Gastrocnemius medialis (tissue), 4 donors: ENCODE measurements at regions of chr7 and their contacts with region 1.

Region 1: DNA sequence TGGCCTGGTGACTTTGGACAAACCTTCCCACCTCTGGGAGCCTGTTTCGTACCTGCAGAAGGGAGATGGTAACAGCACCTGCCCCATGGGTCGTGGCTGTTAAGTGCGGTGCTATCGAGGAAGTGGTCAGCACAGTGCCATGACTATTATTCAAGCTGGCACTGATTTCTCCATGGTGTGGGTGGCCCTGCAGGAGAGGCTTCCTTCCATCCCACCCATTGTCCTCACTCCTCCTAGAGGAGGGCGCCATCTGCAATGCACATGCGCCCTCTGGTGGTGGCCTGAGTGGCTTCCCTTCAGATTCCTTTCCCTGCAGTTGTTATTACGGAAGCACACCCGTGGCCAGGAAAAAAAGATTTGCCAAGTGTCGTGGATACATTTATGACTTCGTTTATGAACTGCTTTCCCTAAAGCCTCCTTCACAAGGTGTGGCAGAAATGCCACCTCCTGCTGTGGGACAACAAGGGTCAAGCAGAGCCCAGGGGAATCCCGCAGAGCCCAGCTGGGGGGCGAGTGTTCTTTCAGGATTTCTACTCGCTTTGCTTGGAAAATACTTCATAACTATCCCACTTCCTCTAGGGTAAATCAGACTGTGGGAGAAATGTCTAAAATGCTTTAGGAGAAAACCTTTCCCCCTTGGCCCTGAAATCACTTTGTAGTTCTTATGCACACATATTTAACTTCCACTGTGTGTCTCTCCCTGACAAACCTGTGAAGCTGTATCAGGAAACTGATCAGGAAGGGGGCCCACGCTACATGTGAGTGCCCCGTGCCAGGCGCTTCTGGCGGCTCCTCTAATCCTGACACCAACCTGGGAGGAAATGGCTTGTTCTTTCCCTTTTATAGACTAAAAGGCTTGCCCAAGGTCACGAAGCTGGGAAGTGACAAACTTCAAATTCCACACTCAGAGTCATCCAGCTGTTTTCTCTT is 98.0 kb upstream of the ANLN start:
- DNase-seq: peak; percentile 71 to 82
- ATAC-seq: peak; percentile 47 to 57
- H3K4me3 ChIP-seq: peak overlapping the region; percentile 30 to 47 (median 35)
- H3K27ac ChIP-seq: peak overlapping the region; percentile 86 to 96 (median 94)
- H3K4me1 ChIP-seq: peaks cover 49 to 60% of the 10 kb centered on the region in 2 donors
- H3K27me3 ChIP-seq: no peaks in the 10 kb centered on the region
- CTCF ChIP-seq: peak; percentile 97 to 99 (median 97)
- POLR2A ChIP-seq: no peak

Region 2: GRCh38 chr7:35985126-35985754 is 306.4 kb before region 1 on chr7:
- in situ Hi-C with region 1: loop called in 3 of 4 experiments (anchors 5 to 10 kb)
- intact Hi-C with region 1: loop called (anchors 1 kb)
- DNase-seq: peak; percentile 68 to 72
- ATAC-seq: peak; percentile 61 to 90
- H3K4me3 ChIP-seq: no peak overlapping the region
- H3K27ac ChIP-seq: no peak overlapping the region
- H3K4me1 ChIP-seq: peaks cover 15 to 23% of the 10 kb centered on the region in 2 donors
- H3K27me3 ChIP-seq: no peaks in the 10 kb centered on the region
- CTCF ChIP-seq: peak; percentile 86 to 93 (median 93)
- POLR2A ChIP-seq: no peak

Region 3: DNA sequence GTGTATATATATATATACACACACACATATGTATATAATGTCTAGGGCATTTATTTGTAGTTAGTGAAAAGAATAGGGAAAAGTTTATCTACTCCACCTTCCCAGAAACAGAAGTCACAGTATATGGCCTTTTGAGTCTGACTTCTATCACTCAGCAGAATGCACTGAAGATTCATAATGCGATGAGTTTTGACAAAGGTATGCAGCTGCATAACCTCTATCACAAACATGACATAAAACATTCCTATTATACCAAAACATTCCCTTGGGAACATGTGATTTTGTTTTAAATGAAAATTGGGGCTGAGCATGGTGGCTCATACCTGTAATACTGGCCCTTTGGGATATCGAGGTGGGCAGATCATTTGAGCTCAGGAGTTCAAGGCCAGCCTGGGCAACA is 275.9 kb before region 1 on chr7:
- in situ Hi-C with region 1: loop called in 1 of 4 experiments (anchors 10 kb)
- intact Hi-C with region 1: no loop called
- DNase-seq: no peak
- ATAC-seq: no peak
- H3K4me3 ChIP-seq: no peak overlapping the region
- H3K27ac ChIP-seq: no peak overlapping the region
- H3K4me1 ChIP-seq: no peaks in the 10 kb centered on the region
- H3K27me3 ChIP-seq: no peaks in the 10 kb centered on the region
- CTCF ChIP-seq: no peak
- POLR2A ChIP-seq: no peak

Region 4: DNA sequence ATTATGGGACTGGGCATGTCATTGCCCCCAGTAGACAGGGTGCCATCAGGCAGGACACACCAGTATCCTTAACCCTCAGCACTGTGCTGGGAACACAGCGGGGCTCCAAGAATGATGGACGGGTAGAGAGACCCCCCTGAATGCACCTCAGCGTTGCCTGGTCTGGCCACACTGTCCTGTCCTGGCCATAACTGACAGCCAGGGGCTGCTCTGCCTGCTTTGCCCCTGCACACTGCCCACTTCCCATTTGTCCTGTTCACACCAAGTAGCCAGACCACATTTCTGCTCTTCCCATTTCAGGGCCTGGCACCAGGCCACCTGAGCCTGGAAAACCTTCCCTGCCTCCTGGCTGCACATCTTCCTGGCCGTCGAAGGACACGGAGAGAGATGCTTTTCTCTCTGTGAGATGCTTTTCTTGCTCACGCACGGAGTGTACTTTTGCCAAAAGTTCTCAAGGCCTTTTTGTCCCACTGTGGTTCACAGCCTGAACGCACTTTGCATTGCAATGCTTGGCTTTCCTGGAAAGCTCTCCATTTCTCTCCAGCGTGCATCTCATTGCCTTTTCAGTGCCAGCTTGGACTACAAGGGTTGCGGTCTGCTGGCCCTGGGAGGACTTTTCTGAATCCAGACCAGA is 269.6 kb before region 1 on chr7:
- in situ Hi-C with region 1: loop called in 1 of 4 experiments (anchors 10 kb)
- intact Hi-C with region 1: loop called (anchors 1 kb)
- DNase-seq: peak in 1 of 2 donors; percentile 28
- ATAC-seq: peak; percentile 40 to 45
- H3K4me3 ChIP-seq: no peak overlapping the region
- H3K27ac ChIP-seq: peak overlapping the region in 1 of 4 donors; percentile 32
- H3K4me1 ChIP-seq: peaks cover 8 to 10% of the 10 kb centered on the region in 2 donors
- H3K27me3 ChIP-seq: no peaks in the 10 kb centered on the region
- CTCF ChIP-seq: no peak
- POLR2A ChIP-seq: no peak

Region 5: DNA sequence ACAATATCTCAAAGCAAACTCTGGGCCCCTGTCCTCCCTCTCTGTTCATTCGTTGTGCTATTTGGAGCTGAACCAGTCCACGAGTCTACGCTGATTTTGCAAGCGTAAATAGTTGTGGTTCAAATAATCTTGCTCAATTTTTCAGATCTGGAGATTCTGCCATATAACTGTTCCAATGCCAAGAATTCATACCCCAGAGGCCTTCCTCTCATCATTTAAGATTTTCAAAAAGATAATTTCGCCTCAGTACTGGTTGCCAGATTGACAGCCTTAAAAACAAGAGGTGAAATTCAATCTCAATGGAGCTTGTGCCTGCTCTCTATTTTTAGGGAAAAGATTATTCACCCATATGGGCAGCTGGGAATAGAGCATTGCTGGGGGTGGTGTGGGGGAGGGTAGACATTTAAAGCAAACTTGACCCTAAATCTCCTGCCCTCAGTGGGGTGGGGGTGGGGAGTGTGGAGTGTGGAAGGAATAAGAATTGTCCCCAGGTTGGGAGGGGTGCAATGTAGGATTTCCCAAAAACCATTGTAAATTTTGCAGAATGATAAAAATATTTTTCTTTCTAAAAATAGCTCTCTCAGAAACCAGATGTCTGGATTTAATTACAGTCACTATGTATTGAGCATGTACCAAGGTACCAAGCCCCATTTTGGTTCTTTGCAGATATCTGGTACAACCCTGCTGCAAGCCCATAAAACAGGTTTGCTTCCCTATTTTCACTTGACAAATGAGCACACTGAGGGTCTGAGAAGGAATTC is 243.3 kb before region 1 on chr7:
- in situ Hi-C with region 1: no loop called
- intact Hi-C with region 1: loop called (anchors 5 kb)
- DNase-seq: peak; percentile 71 to 84
- ATAC-seq: peak; percentile 90
- H3K4me3 ChIP-seq: no peak overlapping the region
- H3K27ac ChIP-seq: peak overlapping the region; percentile 90 to 94 (median 92)
- H3K4me1 ChIP-seq: peaks cover 59 to 87% of the 10 kb centered on the region in 2 donors
- H3K27me3 ChIP-seq: no peaks in the 10 kb centered on the region
- CTCF ChIP-seq: no peak
- POLR2A ChIP-seq: no peak

Region 6: DNA sequence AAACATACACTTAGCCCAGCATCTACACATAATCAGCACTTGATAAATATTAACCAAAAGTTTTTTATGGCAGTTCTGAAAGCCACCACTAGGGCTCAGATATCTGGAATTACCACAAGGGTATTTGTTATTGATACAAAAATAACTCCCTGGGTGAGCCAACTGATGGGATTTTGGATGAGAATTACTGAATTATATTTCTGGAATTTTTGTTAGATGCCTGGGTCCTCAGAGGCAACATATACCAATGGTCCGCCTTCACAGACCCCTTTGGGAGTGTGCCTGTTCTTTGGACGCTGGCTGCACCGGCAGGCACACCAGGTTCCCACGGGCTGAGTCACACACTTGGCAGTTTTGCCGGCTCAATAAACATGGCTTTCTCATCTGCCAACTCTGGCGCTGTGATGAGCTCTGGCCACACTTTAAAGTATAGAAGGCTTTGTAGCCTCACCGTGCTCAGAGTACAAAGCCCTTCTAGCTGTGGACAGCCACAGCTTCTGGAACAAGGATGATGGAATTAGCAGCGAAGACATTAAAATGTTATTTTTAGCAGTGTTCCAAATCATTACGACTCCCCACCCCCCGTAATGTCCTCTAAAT is 163.1 kb before region 1 on chr7:
- in situ Hi-C with region 1: no loop called
- intact Hi-C with region 1: loop called (anchors 1 kb)
- DNase-seq: peak; percentile 87 to 91
- ATAC-seq: peak; percentile 65 to 80
- H3K4me3 ChIP-seq: peak overlapping the region in 2 of 4 donors; percentile 22 to 37
- H3K27ac ChIP-seq: peak overlapping the region; percentile 86 to 98 (median 95)
- H3K4me1 ChIP-seq: peaks cover 50 to 51% of the 10 kb centered on the region in 2 donors
- H3K27me3 ChIP-seq: no peaks in the 10 kb centered on the region
- CTCF ChIP-seq: peak; percentile 86 to 91 (median 88)
- POLR2A ChIP-seq: peak in 1 of 2 donors; percentile 45

Region 7: DNA sequence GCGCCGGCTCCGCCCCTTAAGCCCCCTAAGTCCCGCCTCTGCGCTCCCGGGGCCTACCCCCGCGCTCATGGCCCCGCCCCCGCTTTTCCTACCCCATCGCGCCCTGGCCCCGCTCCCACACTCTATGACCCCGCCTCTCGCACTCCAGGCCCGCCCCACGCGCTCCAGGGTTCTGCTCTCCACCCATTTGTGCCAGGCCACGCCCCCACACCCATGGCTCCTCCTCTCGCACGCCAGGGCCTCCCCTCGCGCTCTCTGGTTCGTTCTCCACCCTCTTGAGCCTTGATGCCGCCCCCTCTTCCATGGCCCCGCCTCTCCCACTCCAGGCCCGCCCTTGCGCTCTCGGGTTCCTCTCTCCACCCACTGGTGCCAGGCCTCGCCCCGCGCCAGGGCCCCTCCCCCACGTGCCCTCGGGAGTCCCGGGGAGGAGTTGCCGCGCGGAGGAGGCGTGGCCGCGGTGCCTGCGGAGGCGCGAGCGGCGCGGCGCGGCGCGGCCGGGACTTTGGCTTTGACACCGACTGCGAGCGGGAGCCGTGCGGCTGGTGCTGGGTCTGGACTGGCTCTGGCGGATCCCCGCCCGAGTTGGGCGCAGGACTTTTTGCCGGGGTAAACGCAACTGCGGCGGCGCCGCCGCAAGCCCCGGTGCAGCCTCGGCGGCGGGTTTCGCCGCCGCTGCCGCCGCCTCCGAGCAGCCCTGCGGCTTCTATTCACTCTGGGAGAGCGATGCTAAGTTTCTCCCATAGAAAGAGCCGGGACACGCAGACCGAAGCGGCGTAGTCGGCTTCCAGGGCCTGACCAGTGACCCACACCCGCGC is 138.7 kb before region 1 on chr7 and contains the start of gene EEPD1:
- in situ Hi-C with region 1: loop called (anchors 10 to 25 kb)
- intact Hi-C with region 1: loop called (anchors 2 kb)
- DNase-seq: peak; percentile 100
- ATAC-seq: peak; percentile 71 to 81
- H3K4me3 ChIP-seq: peak within 1 kb of the TSS; percentile 85 to 93 (median 88)
- H3K27ac ChIP-seq: peak within 1 kb of the TSS; percentile 94 to 98 (median 95)
- H3K4me1 ChIP-seq: peaks cover 32 to 37% of the 10 kb centered on the region in 2 donors
- H3K27me3 ChIP-seq: no peaks in the 10 kb centered on the region
- CTCF ChIP-seq: no peak
- POLR2A ChIP-seq: peak; percentile 91 to 96
- total RNA-seq, gene EEPD1: 41.0 to 68.5 (median 61.3) TPM